SK-N-SH (cell line): ENCODE measurements at regions of chr2 and their contacts with region 1.

Region 1: GRCh38 chr2:23824777-23825212 is 102.1 kb downstream of the ATAD2B start:
- DNase-seq: peak; percentile 65
- H3K4me3 ChIP-seq: no peak overlapping the region
- H3K27ac ChIP-seq: no peak overlapping the region
- H3K4me1 ChIP-seq: no peaks in the 10 kb centered on the region; a peak in 1 of 4 replicates
- H3K27me3 ChIP-seq: no peaks in the 10 kb centered on the region
- CTCF ChIP-seq: peak; percentile 94
- EP300 ChIP-seq: no peak
- RAD21 ChIP-seq: peak; percentile 85

Region 2: GRCh38 chr2:23803965-23804542 is 20.7 kb before region 1 on chr2:
- CTCF ChIA-PET with region 1: interaction called, 27 read pairs
- POLR2A ChIA-PET with region 1: no interaction called
- DNase-seq: peak; percentile 34
- H3K4me3 ChIP-seq: no peak overlapping the region
- H3K27ac ChIP-seq: peak overlapping the region in 1 of 2 experiments; percentile 8; a peak in 1 of 4 replicates
- H3K4me1 ChIP-seq: peaks cover 2 to 16% of the 10 kb centered on the region in 2 experiments; a peak in 3 of 4 replicates
- H3K27me3 ChIP-seq: no peaks in the 10 kb centered on the region
- CTCF ChIP-seq: peak; percentile 55
- EP300 ChIP-seq: no peak
- RAD21 ChIP-seq: peak; percentile 34

Region 3: DNA sequence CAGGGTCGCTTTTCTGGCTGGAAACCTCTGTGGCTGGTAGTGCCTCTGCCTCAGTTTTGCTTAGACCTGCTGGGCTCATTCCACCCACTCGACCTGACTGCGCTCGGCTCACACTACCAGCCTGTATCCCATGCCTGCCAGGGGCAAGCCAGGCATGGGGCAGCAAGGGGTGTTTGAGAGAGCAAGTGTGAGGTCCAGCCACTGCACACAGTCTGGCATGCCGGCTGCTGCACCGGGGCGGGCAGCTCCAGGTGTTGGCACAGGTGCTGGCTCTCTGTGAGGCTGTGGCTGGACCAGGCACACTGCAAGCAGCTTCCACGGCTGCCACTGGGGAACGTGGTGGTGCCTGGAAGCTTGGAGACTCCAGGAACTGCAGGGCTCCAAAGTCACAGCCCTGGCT is 11.2 kb after region 1 on chr2:
- CTCF ChIA-PET with region 1: interaction called, 23 read pairs
- POLR2A ChIA-PET with region 1: no interaction called
- DNase-seq: no peak
- H3K4me3 ChIP-seq: no peak overlapping the region
- H3K27ac ChIP-seq: no peak overlapping the region
- H3K4me1 ChIP-seq: no peaks in the 10 kb centered on the region
- H3K27me3 ChIP-seq: no peaks in the 10 kb centered on the region
- CTCF ChIP-seq: no peak
- EP300 ChIP-seq: no peak
- RAD21 ChIP-seq: no peak

Region 4: DNA sequence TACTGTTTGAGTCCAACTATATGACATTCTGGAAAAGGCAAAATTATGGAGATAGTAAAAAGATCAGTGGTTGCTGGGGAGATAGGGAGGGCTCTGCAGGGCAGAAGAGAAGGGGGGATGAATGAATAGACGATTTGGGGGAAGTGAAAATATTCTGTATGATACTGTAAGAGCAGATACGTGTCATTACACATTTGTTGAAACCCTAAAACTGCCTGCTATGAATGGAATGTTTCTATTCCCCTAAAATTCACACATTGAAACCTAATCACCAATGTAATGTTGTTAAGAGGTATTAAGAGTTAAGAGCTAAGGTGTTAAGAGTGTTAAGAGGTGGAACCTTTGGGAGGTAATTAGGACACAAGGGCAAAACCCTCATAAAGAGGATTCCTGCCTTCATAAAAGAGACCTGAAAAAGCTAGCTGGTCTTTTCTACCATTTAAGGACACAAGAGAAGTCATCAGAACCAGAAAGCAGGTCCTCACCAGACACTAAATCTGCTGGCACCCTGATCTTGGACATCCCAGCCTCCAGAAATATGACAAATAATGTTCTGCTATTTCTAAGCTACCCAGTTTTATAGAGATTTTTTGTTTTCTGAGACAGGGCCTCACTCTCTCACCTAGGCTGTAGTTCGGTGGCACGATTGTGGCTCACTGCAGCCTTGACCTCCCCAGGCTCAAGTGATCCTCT is 25.9 kb after region 1 on chr2:
- CTCF ChIA-PET with region 1: interaction called, 21 read pairs
- POLR2A ChIA-PET with region 1: no interaction called
- DNase-seq: no peak
- H3K4me3 ChIP-seq: no peak overlapping the region
- H3K27ac ChIP-seq: no peak overlapping the region
- H3K4me1 ChIP-seq: no peaks in the 10 kb centered on the region
- H3K27me3 ChIP-seq: no peaks in the 10 kb centered on the region
- CTCF ChIP-seq: no peak
- EP300 ChIP-seq: no peak
- RAD21 ChIP-seq: no peak

Region 5: DNA sequence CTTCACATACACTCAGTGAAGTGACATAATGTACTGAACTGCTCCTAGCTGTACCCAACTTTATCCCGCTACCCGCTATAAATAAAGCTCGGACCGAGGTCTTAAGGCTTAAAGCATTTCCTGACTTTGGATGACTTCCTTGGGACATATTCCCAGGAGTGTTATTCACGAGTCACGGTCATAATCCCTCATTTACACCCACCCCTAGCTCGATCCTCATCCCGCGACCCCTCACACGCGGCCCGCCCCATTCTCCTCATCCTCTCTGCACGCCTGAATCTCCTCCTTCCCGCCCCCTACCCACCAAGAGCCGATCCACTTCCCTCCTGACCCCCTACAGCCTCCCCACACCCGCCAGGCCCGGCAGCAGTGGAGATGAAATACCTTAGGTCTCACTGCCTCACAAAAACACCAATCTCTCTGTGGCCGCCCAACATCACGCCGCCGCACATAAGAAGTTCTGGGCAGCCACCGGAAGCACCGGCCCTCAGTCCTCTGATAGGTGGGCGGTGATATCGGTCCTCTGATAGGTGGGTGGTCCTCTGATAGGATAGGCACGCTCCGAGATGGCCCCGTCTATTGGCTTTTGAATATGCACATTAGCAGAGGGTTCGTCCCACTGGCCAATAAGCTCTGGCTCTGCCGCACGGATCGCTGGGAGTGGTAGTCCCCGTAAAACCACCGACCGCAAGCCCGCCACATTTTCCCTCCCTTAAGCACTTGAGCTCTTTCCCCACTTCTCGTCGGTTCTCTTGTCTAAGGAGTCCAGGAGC is 222.3 kb after region 1 on chr2 and contains the start of gene WDCP:
- CTCF ChIA-PET with region 1: interaction called, 11 read pairs
- POLR2A ChIA-PET with region 1: interaction called, 4 read pairs
- DNase-seq: peak; percentile 93
- H3K4me3 ChIP-seq: peak within 1 kb of the TSS; percentile 75 to 89
- H3K27ac ChIP-seq: peak within 1 kb of the TSS; percentile 54 to 74; a peak in 3 of 4 replicates
- H3K4me1 ChIP-seq: peaks cover 3 to 16% of the 10 kb centered on the region in 2 experiments; a peak in 2 of 4 replicates
- H3K27me3 ChIP-seq: no peaks in the 10 kb centered on the region
- CTCF ChIP-seq: no peak
- EP300 ChIP-seq: no peak
- RAD21 ChIP-seq: no peak
- polyA plus RNA-seq, gene WDCP: 7.1 and 11.9 TPM in 2 replicates

Region 6: DNA sequence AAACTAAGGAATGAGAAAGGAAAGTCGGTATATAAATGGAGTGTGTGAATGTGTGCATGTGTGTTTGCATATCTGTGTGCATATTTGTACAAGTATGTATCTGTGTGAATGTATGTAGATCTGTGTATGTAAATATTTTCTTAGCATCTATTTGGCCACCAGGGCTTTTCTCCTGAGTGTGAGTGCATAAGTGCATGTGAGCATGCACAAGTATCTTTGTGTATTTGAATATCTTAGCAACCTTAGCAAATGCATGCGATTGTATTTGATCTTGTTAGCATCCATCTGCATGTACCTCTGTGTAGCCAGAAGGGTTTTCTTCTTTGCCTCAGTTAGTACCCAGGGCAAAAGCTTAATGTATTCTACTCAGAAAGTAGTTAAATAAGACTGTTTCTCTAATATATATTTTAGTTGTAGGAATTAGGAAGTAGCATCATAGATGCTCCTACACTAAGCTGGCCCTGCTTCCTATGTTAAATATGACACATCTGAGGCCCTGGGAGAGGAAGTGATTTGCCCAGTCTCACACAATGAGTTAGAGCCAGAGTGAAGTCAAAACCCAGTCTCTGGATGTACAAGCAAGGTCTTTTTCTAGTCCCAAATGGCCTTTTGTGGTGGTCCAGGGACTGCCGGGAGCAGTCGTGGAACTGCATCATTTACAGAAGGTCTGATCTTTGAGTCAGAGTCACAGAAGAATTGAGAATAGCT is 233.9 kb after region 1 on chr2:
- CTCF ChIA-PET with region 1: interaction called, 43 read pairs
- POLR2A ChIA-PET with region 1: interaction called, 3 read pairs
- DNase-seq: no peak
- H3K4me3 ChIP-seq: no peak overlapping the region
- H3K27ac ChIP-seq: no peak overlapping the region
- H3K4me1 ChIP-seq: peaks cover 0 to 9% of the 10 kb centered on the region in 2 experiments; a peak in 1 of 4 replicates
- H3K27me3 ChIP-seq: no peaks in the 10 kb centered on the region
- CTCF ChIP-seq: peak; percentile 8; the same call in 1 of the 2 replicates
- EP300 ChIP-seq: no peak
- RAD21 ChIP-seq: no peak